Right cardiac atrium (tissue), 5 donors: ENCODE measurements at regions of chr20 and their contacts with region 1.

Region 1: DNA sequence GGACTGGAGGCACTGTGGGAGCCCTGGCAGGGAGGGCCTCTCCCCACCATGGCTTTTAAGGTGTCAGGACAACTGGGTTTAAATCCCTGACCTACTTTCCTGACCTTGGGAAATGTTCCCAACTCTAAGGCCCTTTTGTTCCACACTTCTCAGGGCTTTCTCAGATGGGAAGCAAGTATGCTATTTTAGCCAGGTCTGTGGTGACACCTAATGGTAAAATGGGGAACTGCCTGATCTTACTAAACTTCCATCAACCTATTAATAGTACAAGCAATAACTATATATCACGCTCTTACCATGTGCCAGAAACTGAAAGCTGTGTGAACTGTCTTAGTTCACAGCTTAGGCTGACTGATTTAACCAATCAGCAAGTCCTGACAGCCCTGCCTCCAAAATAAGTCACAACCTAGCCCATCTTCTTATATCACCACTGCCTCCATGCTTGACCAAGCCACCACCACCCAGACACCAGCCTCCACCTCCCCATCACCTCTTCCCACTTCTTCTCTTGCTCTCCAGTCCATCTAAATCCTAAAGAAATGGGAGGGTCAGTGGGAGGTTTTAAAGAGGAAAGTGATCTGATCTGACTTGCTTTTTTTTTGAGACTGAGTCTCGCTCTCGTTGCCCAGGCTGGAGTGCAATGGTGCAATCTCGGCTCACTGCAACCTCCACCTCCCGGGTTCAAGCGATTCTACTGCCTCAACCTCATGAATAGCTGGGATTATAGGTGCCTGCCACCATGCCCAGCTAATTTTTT is 6.9 kb upstream of the BLCAP start:
- DNase-seq: no peak
- ATAC-seq: peak; percentile 84 to 86
- H3K4me3 ChIP-seq: no peak overlapping the region
- H3K27ac ChIP-seq: no peak overlapping the region
- H3K4me1 ChIP-seq: no peaks in the 10 kb centered on the region
- H3K27me3 ChIP-seq: no peaks in the 10 kb centered on the region

Region 2: GRCh38 chr20:37192137-37192854 is 342.3 kb before region 1 on chr20:
- intact Hi-C with region 1: loop called in 2 of 4 experiments (anchors 5 to 10 kb)
- DNase-seq: peak; percentile 90 to 96 (median 93)
- ATAC-seq: peak; percentile 89 to 90
- H3K4me3 ChIP-seq: no peak overlapping the region
- H3K27ac ChIP-seq: no peak overlapping the region
- H3K4me1 ChIP-seq: no peaks in the 10 kb centered on the region
- H3K27me3 ChIP-seq: no peaks in the 10 kb centered on the region

Region 3: DNA sequence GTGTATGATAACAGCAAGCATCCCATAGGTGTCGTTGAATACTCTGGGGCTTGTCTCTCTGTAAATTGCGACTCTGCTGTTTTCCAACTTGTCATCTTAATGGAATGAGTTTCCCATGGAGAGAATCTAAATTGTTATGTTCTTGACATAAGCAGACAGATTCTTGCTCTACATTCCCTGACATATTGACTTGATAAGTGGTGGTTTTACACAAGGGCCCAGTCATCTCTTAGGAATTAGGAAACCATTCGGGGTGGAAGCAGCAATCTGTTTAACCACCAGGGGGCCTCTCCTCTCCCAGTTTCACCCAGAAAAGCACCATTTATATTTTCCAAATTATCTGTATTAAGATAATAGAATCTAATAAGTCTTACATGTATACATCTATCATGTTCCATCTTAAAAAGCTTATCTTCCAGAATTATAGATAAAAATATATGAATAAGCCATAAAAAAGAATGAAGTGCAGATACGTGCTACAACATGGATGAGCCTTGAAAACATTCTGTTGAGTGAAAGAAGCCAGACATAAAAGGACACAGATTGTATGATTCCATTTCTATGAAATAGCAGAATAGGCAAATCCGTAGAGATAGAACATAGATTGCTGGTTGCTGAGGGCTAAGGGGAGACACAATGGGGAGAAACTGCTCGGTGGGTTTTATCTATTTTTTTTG is 332.2 kb before region 1 on chr20:
- intact Hi-C with region 1: loop called (anchors 5 to 10 kb)
- DNase-seq: peak in 1 of 3 donors; percentile 64
- ATAC-seq: peak in 1 of 2 donors; percentile 68
- H3K4me3 ChIP-seq: no peak overlapping the region
- H3K27ac ChIP-seq: no peak overlapping the region
- H3K4me1 ChIP-seq: no peaks in the 10 kb centered on the region
- H3K27me3 ChIP-seq: no peaks in the 10 kb centered on the region

Region 4: GRCh38 chr20:37265152-37265551 is 269.4 kb before region 1 on chr20:
- intact Hi-C with region 1: loop called (anchors 2 to 5 kb)
- DNase-seq: no peak
- ATAC-seq: no peak
- H3K4me3 ChIP-seq: no peak overlapping the region
- H3K27ac ChIP-seq: no peak overlapping the region
- H3K4me1 ChIP-seq: no peaks in the 10 kb centered on the region
- H3K27me3 ChIP-seq: no peaks in the 10 kb centered on the region

Region 5: DNA sequence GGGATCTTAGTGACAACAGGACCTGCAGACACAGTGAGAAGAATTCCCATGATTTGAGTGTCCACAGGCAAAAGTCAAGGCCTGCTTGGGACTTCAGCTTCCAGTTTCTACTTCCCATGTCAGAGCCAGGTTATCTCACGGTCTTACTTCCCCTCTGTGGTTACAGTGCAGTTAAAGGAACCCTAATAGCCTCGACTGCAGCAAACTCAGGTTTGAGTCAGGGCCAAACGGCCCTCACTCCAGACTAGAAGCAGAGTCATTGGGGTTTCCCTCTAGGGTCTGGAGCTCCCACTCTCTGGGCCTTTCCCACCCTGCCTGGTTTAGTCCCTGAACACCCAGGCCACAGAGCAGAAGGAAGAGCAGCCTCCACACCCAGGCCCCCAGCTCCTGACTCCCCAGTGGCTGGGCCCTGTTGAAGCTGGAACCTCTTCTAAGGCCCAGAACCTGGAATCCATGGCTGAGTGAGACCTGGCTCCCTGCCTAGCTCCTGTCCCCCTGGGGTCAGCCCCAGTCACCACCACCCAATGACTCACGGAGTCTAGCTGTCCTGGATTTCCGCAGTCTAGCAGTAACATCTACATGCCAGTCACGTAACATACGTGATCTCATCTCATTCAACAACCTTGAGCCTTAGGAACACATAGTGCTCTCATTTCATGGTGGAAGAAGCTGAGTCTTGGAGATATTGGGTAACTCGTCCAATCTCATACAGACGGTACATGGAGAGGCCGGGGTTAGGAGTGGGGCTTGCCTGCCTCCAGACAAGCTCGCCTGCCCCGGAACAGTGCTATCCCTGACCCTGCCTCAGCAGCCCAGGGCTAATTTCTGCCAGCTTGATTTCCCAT is 263.8 kb before region 1 on chr20:
- intact Hi-C with region 1: loop called (anchors 2 to 5 kb)
- DNase-seq: no peak
- ATAC-seq: peak; percentile 28 to 31
- H3K4me3 ChIP-seq: no peak overlapping the region
- H3K27ac ChIP-seq: no peak overlapping the region
- H3K4me1 ChIP-seq: no peaks in the 10 kb centered on the region
- H3K27me3 ChIP-seq: no peaks in the 10 kb centered on the region

Region 6: GRCh38 chr20:37392421-37393178 is 142.0 kb before region 1 on chr20:
- intact Hi-C with region 1: loop called in 3 of 4 experiments (anchors 5 to 10 kb)
- DNase-seq: peak in 2 of 3 donors; percentile 51 to 62
- ATAC-seq: no peak
- H3K4me3 ChIP-seq: no peak overlapping the region
- H3K27ac ChIP-seq: no peak overlapping the region
- H3K4me1 ChIP-seq: no peaks in the 10 kb centered on the region
- H3K27me3 ChIP-seq: no peaks in the 10 kb centered on the region